Activated CD8-positive, alpha-beta memory T cell treated with anti-CD3 and anti-CD28 coated beads, Interleukin-2, amount 10 ng/mL, durations not matched to agents 7 days and 5 days (primary cell): ENCODE measurements at regions of chr5 and their contacts with region 1.

Region 1: GRCh38 chr5:173057062-173057924 is 1.1 kb downstream of the CREBRF start:
- DNase-seq: peak; percentile 99
- ATAC-seq: peak; percentile 88
- H3K4me3 Mint-ChIP-seq: peak overlapping the region; percentile 86
- H3K27ac Mint-ChIP-seq: peak overlapping the region; percentile 92
- H3K4me1 Mint-ChIP-seq: peaks cover 41% of the 10 kb centered on the region
- H3K27me3 Mint-ChIP-seq: no peaks in the 10 kb centered on the region

Region 2: GRCh38 chr5:172765766-172766286 is 291.5 kb before region 1 on chr5:
- CTCF ChIA-PET with region 1: no interaction called
- DNase-seq: no peak
- ATAC-seq: no peak
- H3K4me3 Mint-ChIP-seq: peak overlapping the region; percentile 77
- H3K27ac Mint-ChIP-seq: peak overlapping the region; percentile 90
- H3K4me1 Mint-ChIP-seq: peaks cover 29% of the 10 kb centered on the region
- H3K27me3 Mint-ChIP-seq: no peaks in the 10 kb centered on the region

Region 3: DNA sequence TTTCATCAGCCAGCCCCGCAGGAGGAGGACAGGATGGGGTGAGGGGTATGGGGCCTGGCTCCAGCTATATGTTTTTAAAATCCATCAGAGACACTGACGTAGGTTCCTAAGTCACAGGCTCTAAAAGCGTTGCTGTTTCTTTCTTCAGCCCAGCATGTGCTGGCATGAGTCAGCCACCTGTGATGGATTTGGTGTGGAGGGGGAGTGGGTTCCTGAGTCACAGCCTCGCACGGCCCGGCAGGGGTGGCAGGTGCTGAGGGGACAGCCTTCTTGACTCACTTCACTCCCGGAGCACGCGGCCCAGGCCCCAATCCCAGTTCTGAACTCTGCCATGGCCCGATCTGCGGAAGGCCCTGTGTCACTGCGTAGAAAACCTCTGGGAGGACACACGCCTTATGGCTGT is 136.8 kb before region 1 on chr5:
- CTCF ChIA-PET with region 1: no interaction called
- DNase-seq: no peak
- ATAC-seq: no peak
- H3K4me3 Mint-ChIP-seq: no peak overlapping the region
- H3K27ac Mint-ChIP-seq: no peak overlapping the region
- H3K4me1 Mint-ChIP-seq: peaks cover 13% of the 10 kb centered on the region
- H3K27me3 Mint-ChIP-seq: no peaks in the 10 kb centered on the region

Region 4: GRCh38 chr5:173035904-173036707 is 21.2 kb before region 1 on chr5:
- CTCF ChIA-PET with region 1: interaction called, 11 read pairs
- DNase-seq: no peak
- ATAC-seq: no peak
- H3K4me3 Mint-ChIP-seq: peak overlapping the region; percentile 63
- H3K27ac Mint-ChIP-seq: peak overlapping the region; percentile 88
- H3K4me1 Mint-ChIP-seq: peaks cover 44% of the 10 kb centered on the region
- H3K27me3 Mint-ChIP-seq: no peaks in the 10 kb centered on the region